ENCODE measurements at regions of chr13 and their contacts with region 1.

Region 1: DNA sequence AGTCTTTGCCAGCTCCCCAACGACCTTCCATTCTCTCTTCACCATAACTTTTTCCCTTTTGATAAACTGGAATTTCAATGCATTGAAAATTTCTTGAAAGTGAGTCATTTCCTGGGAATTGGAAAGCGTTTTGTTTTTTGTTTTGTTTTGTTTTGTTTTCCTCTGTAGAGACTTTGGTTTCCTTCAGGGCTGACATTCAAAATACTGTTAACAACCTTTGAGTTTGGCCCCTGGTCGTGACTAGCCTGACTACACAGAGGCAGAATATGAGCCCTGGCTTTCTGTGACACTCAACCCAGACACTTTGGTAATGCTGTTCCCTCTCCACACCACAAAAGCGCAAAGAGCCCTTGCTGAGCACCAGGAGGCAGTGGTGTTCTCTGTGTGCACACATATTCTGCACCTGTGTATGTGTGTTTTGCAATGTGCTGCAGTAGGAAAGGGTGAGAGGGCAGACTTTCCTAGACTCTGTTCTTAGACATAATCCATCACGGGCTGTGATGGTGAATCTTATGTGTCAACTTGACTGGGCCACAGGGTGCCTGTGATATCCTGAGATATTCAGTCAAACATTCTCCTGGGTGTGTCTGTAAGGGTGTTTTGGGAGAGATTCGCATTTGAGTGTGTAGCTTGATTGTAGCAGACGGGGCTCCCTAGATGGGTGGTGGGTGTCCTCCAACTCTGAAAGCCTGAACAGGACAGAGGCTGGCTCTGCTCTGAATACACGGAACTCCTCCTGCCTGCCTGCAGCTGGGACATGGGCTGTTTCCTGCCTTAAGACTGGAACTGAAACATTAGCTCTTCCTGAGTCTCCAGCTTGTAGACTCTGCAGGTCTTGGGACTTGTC is 29.5 kb upstream of the ANKRD10 start:
- DNase-seq: peak; percentile 67
- H3K4me3 ChIP-seq: peak overlapping the region in 1 of 3 experiments; percentile 1
- H3K27ac ChIP-seq: peak overlapping the region; percentile 73
- H3K4me1 ChIP-seq: peaks cover 18% of the 10 kb centered on the region
- H3K27me3 ChIP-seq: no peaks in the 10 kb centered on the region
- CTCF ChIP-seq: peak; percentile 57 to 67
- POLR2A ChIP-seq: no peak

Region 2: GRCh38 chr13:110726726-110727125 is 217.6 kb before region 1 on chr13:
- CTCF ChIA-PET with region 1: no interaction called
- POLR2A ChIA-PET with region 1: no interaction called
- dilution Hi-C with region 1: no loop called
- intact Hi-C with region 1: no loop called
- DNase-seq: no peak
- H3K4me3 ChIP-seq: no peak overlapping the region
- H3K27ac ChIP-seq: no peak overlapping the region
- H3K4me1 ChIP-seq: no peaks in the 10 kb centered on the region
- H3K27me3 ChIP-seq: no peaks in the 10 kb centered on the region
- CTCF ChIP-seq: no peak
- POLR2A ChIP-seq: no peak

Region 3: DNA sequence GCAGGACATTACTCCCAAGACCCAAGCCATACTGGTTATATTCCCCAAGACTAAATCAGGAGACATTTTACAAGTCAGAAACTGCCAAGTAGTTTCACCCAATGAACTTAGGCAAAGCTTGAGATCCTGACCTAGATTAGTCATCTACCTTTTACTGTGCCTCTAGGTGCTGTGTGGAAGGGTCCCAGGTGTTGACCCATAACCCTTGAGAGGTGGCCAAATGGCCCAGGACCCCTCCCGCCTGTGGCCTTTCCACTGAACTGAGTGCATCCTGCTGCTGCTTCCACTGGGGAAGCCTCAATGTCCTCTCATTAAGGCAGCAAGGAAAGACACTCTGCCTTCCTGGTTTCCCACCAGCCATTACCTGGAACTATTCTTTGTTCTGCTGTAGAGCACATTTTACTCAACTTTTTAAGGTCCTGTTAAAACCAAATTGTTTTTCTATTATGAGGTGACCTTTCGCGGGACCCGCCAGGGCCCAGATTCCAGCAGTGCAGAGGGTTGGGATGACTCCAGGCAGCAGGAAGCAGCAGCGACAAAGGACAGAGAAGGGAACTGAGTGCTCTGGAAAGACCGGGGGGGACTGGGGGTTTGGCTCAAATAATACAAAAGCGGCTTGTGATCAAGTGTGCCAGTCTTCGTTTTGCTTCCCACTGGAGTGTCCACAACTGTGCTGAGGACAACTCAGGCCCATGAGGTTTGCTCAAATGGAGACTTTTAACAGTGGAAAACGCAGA is 56.6 kb before region 1 on chr13:
- CTCF ChIA-PET with region 1: no interaction called
- POLR2A ChIA-PET with region 1: no interaction called
- dilution Hi-C with region 1: no loop called
- intact Hi-C with region 1: no loop called
- DNase-seq: no peak
- H3K4me3 ChIP-seq: no peak overlapping the region
- H3K27ac ChIP-seq: no peak overlapping the region
- H3K4me1 ChIP-seq: no peaks in the 10 kb centered on the region
- H3K27me3 ChIP-seq: no peaks in the 10 kb centered on the region
- CTCF ChIP-seq: no peak
- POLR2A ChIP-seq: no peak

Region 4: GRCh38 chr13:110925023-110925612 is 19.2 kb before region 1 on chr13:
- CTCF ChIA-PET with region 1: interaction called, 4 read pairs
- POLR2A ChIA-PET with region 1: no interaction called
- dilution Hi-C with region 1: no loop called
- intact Hi-C with region 1: loop called (anchors 2 kb)
- DNase-seq: no peak
- H3K4me3 ChIP-seq: no peak overlapping the region
- H3K27ac ChIP-seq: no peak overlapping the region
- H3K4me1 ChIP-seq: no peaks in the 10 kb centered on the region
- H3K27me3 ChIP-seq: peaks cover 33 to 39% of the 10 kb centered on the region in 2 experiments
- CTCF ChIP-seq: peak in 1 of 2 donors; percentile 8
- POLR2A ChIP-seq: no peak

Region 5: DNA sequence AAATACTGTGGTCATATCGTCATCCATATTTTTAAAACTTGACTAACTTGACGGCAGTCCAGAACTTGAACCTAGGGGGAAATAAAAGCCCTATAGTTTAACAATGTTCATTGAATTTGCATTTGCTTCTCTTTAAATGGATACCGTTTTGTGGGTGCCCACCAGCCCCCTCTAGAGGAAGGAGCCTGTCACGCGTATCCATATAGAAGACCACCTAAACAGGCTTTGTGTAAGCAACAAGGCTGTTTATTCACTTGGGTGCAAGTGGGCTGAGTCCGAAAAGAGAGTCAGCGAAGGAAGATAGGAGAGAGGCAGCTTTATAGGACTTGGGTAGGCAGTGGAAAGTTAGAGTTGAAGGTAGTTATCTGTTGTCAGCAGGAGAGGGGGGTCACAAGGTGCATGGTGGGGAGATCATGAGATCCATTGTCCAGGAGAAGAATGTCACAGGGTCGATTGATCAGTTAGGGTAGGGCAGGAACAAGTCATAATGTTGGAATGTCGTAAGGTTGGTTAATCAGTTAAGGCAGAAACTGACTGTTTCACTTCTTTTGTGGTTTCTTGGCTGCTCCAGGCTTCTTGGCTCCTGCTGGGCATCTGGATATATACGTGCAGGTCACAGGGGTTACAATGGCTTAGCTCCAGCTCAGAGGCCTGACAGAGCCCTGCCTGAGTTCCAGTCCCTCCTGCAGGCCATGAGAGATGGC is 13.0 kb after region 1 on chr13:
- CTCF ChIA-PET with region 1: interaction called, 3 read pairs
- POLR2A ChIA-PET with region 1: no interaction called
- dilution Hi-C with region 1: no loop called
- intact Hi-C with region 1: loop called (anchors 1 kb)
- DNase-seq: no peak
- H3K4me3 ChIP-seq: no peak overlapping the region
- H3K27ac ChIP-seq: no peak overlapping the region
- H3K4me1 ChIP-seq: peaks cover 8% of the 10 kb centered on the region
- H3K27me3 ChIP-seq: no peaks in the 10 kb centered on the region
- CTCF ChIP-seq: no peak
- POLR2A ChIP-seq: no peak

Region 6: DNA sequence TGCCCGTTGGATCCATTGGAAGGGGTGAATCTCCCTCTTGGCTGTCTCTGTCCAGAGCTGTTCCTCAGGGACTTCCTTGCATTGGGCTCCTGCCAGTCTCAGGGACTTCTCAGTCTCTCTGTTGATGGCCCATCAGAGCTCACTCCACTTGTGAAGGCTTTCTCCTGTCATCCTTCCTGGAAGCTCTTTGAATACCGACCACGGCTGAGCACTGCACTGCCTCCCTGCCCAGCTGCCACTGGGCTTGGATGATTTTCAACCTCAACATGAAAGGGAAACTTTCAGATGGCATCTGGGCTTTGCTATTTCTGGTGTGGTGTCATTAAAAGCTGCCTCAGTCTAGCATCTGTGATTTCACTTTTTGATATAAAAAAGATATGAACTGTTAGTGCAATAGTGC is 36.6 kb after region 1 on chr13:
- CTCF ChIA-PET with region 1: no interaction called
- POLR2A ChIA-PET with region 1: no interaction called
- dilution Hi-C with region 1: no loop called
- intact Hi-C with region 1: no loop called
- DNase-seq: no peak
- H3K4me3 ChIP-seq: no peak overlapping the region
- H3K27ac ChIP-seq: no peak overlapping the region
- H3K4me1 ChIP-seq: no peaks in the 10 kb centered on the region
- H3K27me3 ChIP-seq: peaks cover 6 to 22% of the 10 kb centered on the region in 2 experiments
- CTCF ChIP-seq: no peak
- POLR2A ChIP-seq: no peak

Region 7: GRCh38 chr13:111006506-111007031 is 62.2 kb after region 1 on chr13:
- CTCF ChIA-PET with region 1: interaction called, 5 read pairs
- POLR2A ChIA-PET with region 1: no interaction called
- dilution Hi-C with region 1: no loop called
- intact Hi-C with region 1: loop called (anchors 1 kb)
- DNase-seq: peak; percentile 77
- H3K4me3 ChIP-seq: no peak overlapping the region
- H3K27ac ChIP-seq: peak overlapping the region; percentile 36
- H3K4me1 ChIP-seq: peaks cover 17% of the 10 kb centered on the region
- H3K27me3 ChIP-seq: peaks cover 0 to 7% of the 10 kb centered on the region in 2 experiments
- CTCF ChIP-seq: no peak
- POLR2A ChIP-seq: no peak

Region 8: GRCh38 chr13:111049802-111050538 is 105.6 kb after region 1 on chr13:
- CTCF ChIA-PET with region 1: interaction called, 5 read pairs
- POLR2A ChIA-PET with region 1: no interaction called
- dilution Hi-C with region 1: no loop called
- intact Hi-C with region 1: loop called (anchors 1 kb)
- DNase-seq: peak; percentile 24
- H3K4me3 ChIP-seq: no peak overlapping the region
- H3K27ac ChIP-seq: no peak overlapping the region
- H3K4me1 ChIP-seq: no peaks in the 10 kb centered on the region
- H3K27me3 ChIP-seq: peaks cover 0 to 1% of the 10 kb centered on the region in 2 experiments
- CTCF ChIP-seq: peak in 1 of 2 donors; percentile 46
- POLR2A ChIP-seq: no peak

Measured in endothelial cell of umbilical vein (primary cell).